Ascending aorta (tissue), 2 donors: ENCODE measurements at regions of chr15 and their contacts with region 1.

Region 1: GRCh38 chr15:93030430-93031105 is 58.4 kb downstream of the RGMA start:
- DNase-seq: peak in 1 of 2 donors; percentile 89
- H3K4me3 ChIP-seq: peak overlapping the region in 1 of 2 donors; percentile 4
- H3K27ac ChIP-seq: peak overlapping the region; percentile 93 to 95
- H3K4me1 ChIP-seq: peaks cover 35 to 48% of the 10 kb centered on the region in 2 donors
- H3K27me3 ChIP-seq: no peaks in the 10 kb centered on the region
- CTCF ChIP-seq: peak; percentile 85 to 92 (median 90)

Region 2: GRCh38 chr15:92714477-92715401 is 315.8 kb before region 1 on chr15:
- intact Hi-C with region 1: no loop called
- DNase-seq: peak in 1 of 2 donors; percentile 80
- H3K4me3 ChIP-seq: peak overlapping the region; percentile 64 to 70
- H3K27ac ChIP-seq: peak overlapping the region; percentile 62 to 83
- H3K4me1 ChIP-seq: no peaks in the 10 kb centered on the region
- H3K27me3 ChIP-seq: no peaks in the 10 kb centered on the region
- CTCF ChIP-seq: peak; percentile 73 to 91 (median 77)

Region 3: GRCh38 chr15:92808978-92809879 is 221.3 kb before region 1 on chr15:
- intact Hi-C with region 1: loop called (anchors 2 kb)
- DNase-seq: peak; percentile 94 to 99
- H3K4me3 ChIP-seq: peak overlapping the region; percentile 69 to 72
- H3K27ac ChIP-seq: peak overlapping the region; percentile 91 to 98
- H3K4me1 ChIP-seq: peaks cover 3 to 34% of the 10 kb centered on the region in 2 donors
- H3K27me3 ChIP-seq: no peaks in the 10 kb centered on the region
- CTCF ChIP-seq: peak; percentile 85 to 100 (median 89)

Region 4: GRCh38 chr15:92917606-92918407 is 112.8 kb before region 1 on chr15:
- intact Hi-C with region 1: no loop called
- DNase-seq: peak; percentile 79 to 98
- H3K4me3 ChIP-seq: peak overlapping the region; percentile 7 to 42
- H3K27ac ChIP-seq: peak overlapping the region; percentile 96 to 97
- H3K4me1 ChIP-seq: peaks cover 9 to 91% of the 10 kb centered on the region in 2 donors
- H3K27me3 ChIP-seq: no peaks in the 10 kb centered on the region
- CTCF ChIP-seq: peak; percentile 75 to 92 (median 88)

Region 5: DNA sequence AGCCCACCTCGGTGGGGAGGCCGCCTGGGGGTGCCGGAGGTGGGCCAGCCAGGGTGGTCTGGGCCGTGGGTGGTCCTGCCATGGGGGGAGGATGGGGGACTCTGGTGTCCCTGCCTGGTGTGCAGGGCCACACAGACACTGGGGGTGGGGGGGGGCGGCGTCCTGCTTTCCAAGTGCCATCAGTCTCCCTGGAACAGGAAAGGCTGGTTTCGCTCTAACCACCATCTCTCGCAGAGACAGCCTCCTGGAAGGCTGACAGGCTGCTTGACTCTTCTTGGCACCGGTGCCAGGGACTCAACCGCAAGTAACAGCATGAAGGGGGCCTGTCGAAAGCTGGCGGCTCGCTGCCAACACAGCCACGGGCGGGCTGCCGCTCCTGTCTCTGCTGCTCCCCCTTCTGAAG is 18.2 kb after region 1 on chr15:
- intact Hi-C with region 1: no loop called
- DNase-seq: no peak
- H3K4me3 ChIP-seq: no peak overlapping the region
- H3K27ac ChIP-seq: no peak overlapping the region
- H3K4me1 ChIP-seq: peaks cover 0 to 2% of the 10 kb centered on the region in 2 donors
- H3K27me3 ChIP-seq: no peaks in the 10 kb centered on the region
- CTCF ChIP-seq: no peak

Region 6: DNA sequence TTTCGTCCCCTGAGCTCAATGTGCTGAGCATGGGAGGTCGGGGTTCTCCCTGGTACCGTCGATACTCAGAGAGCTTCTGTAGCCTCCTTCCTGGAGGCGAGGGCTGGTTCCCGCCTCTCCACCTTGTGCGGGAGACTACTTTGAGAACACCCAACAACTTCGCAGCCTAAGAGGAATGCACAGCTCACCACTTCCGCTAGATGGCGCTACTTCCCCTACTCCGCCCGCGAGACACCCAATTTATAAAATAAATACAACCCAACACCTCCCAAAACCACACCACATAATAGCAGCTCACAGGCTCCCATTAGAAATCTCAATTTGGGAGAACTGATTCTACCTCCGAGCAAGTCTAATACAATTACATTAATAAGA is 57.2 kb after region 1 on chr15:
- intact Hi-C with region 1: loop called (anchors 2 kb)
- DNase-seq: peak in 1 of 2 donors; percentile 85
- H3K4me3 ChIP-seq: peak overlapping the region; percentile 60 to 79
- H3K27ac ChIP-seq: no peak overlapping the region
- H3K4me1 ChIP-seq: peaks cover 0 to 8% of the 10 kb centered on the region in 2 donors
- H3K27me3 ChIP-seq: peaks cover 8% of the 10 kb centered on the region
- CTCF ChIP-seq: peak; percentile 75 to 91 (median 91)

Region 7: GRCh38 chr15:93321881-93322289 is 291.3 kb after region 1 on chr15:
- intact Hi-C with region 1: loop called (anchors 5 kb)
- DNase-seq: no peak
- H3K4me3 ChIP-seq: no peak overlapping the region
- H3K27ac ChIP-seq: no peak overlapping the region
- H3K4me1 ChIP-seq: no peaks in the 10 kb centered on the region
- H3K27me3 ChIP-seq: no peaks in the 10 kb centered on the region
- CTCF ChIP-seq: no peak

Region 8: GRCh38 chr15:94119923-94120775 is 1089.6 kb after region 1 on chr15:
- intact Hi-C with region 1: loop called (anchors 2 kb)
- DNase-seq: peak in 1 of 2 donors; percentile 77
- H3K4me3 ChIP-seq: peak overlapping the region in 1 of 2 donors; percentile 20
- H3K27ac ChIP-seq: peak overlapping the region; percentile 59 to 73
- H3K4me1 ChIP-seq: peaks cover 0 to 5% of the 10 kb centered on the region in 2 donors
- H3K27me3 ChIP-seq: no peaks in the 10 kb centered on the region
- CTCF ChIP-seq: peak; percentile 80 to 88 (median 83)